Right ventricle myocardium inferior (tissue), 1 donor: ENCODE measurements at regions of chr3 and their contacts with region 1.

Region 1: GRCh38 chr3:155701882-155702465 is 42.9 kb downstream of the PLCH1 start:
- DNase-seq: no peak
- ATAC-seq: peak; percentile 72

Region 2: GRCh38 chr3:154334973-154335420 is 1367.0 kb before region 1 on chr3:
- intact Hi-C with region 1: loop called (anchors 10 kb)
- DNase-seq: no peak
- ATAC-seq: no peak

Region 3: DNA sequence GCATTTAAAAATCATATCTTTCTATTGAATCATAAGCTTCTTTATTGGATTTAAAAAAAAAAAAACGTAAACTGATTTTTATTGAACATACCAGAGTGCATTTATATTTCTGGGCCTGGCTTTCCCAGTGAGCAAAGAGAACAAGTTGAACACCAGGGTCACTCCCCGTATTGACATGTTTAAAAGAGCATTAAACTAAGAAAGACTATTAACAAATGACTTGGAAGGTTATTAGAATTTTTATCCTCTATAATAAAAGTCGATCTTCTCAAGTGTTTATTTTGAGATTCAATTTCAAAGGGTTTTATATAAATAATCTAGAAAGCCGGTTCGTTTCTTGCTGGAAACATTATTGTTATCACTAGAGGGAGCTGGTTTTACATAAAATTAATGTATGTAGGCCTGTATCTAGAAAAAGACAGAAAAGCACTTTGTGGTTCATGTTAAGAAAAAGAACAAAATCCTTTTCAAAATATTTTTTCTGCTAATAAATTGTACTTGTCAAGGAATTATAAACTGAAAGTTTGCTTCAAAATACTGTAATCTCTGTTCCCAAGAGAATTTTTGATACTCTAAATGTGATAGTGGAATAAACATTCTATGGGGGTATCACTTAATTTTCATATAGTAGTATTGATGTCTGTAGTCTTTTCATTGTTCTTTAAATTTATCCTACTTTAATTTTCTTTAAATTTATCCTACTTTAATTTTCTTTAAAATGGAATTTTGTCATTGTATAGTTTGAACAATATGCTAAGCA is 943.7 kb before region 1 on chr3:
- intact Hi-C with region 1: loop called (anchors 10 kb)
- DNase-seq: no peak
- ATAC-seq: no peak

Region 4: GRCh38 chr3:155352900-155353490 is 349.0 kb before region 1 on chr3:
- intact Hi-C with region 1: loop called (anchors 2 kb)
- DNase-seq: no peak
- ATAC-seq: peak; percentile 52

Region 5: GRCh38 chr3:155382396-155383042 is 319.5 kb before region 1 on chr3:
- intact Hi-C with region 1: loop called (anchors 2 kb)
- DNase-seq: peak; percentile 85
- ATAC-seq: peak; percentile 78